ENCODE measurements at regions of chr20 and their contacts with region 1.

Region 1: DNA sequence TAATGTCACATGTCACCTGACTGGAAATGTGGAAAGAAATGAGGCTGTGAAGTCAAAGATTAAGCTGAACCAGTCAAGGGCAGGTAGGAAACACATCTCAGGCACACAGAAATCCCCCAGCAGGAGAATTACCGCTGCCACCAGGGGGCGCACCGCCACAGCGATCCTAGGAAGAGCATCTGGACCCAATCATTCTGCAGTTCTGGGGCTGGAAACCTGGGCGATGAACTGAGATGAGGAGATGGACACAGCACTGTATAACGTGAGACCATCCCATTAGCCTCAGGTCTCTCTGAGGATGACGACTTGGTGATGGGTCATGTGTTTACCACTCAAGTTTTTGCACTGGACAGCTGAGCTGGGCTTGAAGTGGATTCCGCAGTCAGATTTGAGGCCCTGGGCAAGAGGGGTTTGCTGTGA is 6.5 kb upstream of the SLC24A3 start:
- DNase-seq: peak; percentile 46 to 82 (median 64)
- ATAC-seq: peak in 3 of 4 donors; percentile 48 to 70 (median 61)
- H3K4me3 ChIP-seq: no peak overlapping the region
- H3K27ac ChIP-seq: no peak overlapping the region
- H3K4me1 ChIP-seq: peaks cover 0 to 4% (median 0%) of the 10 kb centered on the region in 12 donors
- H3K27me3 ChIP-seq: peaks cover 0 to 12% (median 0%) of the 10 kb centered on the region in 9 donors
- CTCF ChIP-seq: peak; percentile 77 to 92 (median 84)
- POLR2A ChIP-seq: no peak

Region 2: DNA sequence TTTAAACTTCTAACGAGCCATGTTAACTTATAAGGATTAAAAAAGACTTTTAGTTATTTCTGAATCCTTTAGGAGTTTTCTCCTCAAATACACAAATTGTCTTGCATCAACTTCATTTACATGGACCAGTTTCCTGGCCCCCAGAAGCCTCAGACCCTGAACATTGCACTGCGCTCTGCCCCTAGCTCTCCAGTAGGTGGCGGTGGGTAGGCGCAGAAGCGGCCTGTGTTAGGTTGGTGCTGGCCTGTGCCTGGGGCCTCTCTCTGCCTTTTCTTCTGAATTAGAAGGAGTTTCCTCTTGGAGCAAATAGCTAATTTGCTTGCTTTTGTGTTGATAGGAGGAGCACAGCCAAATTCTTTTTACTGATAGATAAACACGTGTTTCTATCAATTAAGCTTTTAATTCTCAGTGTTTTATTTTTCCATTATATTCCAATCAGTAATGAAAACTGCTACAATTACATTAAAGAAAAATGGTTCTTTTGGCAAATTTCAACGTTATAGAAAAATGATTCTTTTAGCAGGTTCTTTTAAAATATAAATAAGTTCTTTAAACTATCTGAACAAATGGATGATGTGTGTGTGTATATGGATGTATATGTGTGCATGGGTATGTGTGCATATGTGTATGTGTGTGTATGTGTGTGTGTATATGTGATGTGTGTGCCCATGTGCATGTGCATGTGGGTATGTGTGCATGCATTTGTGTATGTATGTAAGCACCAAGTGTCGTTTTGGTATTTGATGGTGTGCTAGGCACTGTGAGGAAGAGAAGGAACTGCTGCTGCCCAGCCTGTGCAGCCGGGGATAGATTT is 573.6 kb before region 1 on chr20:
- intact Hi-C with region 1: loop called in 1 of 10 experiments (anchors 10 kb)
- DNase-seq: peak; percentile 56 to 70 (median 61)
- ATAC-seq: peak; percentile 88 to 94 (median 89)
- H3K4me3 ChIP-seq: no peak overlapping the region
- H3K27ac ChIP-seq: no peak overlapping the region
- H3K4me1 ChIP-seq: peaks cover 0 to 5% (median 0%) of the 10 kb centered on the region in 12 donors
- H3K27me3 ChIP-seq: no peaks in the 10 kb centered on the region
- CTCF ChIP-seq: peak; percentile 77 to 96 (median 86)
- POLR2A ChIP-seq: no peak

Region 3: GRCh38 chr20:18904624-18905023 is 301.4 kb before region 1 on chr20:
- intact Hi-C with region 1: loop called in 3 of 10 experiments (anchors 10 kb)
- DNase-seq: peak in 1 of 5 donors; percentile 27
- ATAC-seq: peak in 2 of 4 donors; percentile 64 to 66
- H3K4me3 ChIP-seq: no peak overlapping the region
- H3K27ac ChIP-seq: no peak overlapping the region
- H3K4me1 ChIP-seq: no peaks in the 10 kb centered on the region
- H3K27me3 ChIP-seq: no peaks in the 10 kb centered on the region
- CTCF ChIP-seq: peak in 9 of 12 donors; percentile 6 to 60 (median 46)
- POLR2A ChIP-seq: no peak

Region 4: DNA sequence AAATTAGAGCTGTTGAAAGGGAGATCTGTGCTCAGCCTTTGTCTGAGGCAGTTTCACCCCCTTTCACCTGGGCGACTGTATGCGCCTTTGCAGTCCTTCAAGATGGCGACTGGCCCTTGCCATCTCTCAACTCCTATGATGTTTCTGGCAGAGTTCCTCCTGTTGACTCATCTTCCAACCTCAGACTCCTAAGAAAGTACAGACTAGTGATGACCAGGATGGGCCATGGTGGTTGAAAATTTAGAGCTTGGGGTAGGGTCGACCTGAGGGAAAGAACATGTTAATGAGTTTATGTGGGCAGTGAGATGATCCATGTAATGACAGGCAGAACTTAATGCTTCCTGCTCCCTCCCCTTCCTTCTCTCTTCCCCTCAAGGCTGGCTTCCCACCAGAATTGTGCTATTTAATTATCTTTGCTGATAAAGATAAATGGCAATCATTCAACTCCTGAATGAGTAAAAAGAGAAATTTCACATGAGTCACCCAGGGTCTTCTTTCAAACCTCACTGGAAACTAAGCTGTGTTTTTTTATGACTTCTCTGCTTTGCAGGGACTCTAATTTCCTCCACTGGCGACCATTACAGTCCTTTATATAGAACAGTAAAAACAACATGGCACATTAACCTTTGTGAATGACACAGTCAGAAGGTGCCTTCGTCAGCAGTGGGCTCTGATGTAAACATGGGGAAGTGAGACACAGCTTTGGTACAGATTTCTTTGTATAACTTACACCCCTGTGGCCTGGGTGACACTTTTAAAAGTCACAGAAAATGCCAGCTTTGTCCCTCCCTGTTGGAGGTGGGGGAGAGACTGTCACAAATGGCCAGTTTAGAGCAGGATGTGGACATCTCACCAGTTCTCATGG is 288.9 kb before region 1 on chr20:
- intact Hi-C with region 1: loop called in 1 of 10 experiments (anchors 10 kb)
- DNase-seq: no peak
- ATAC-seq: no peak
- H3K4me3 ChIP-seq: no peak overlapping the region
- H3K27ac ChIP-seq: no peak overlapping the region
- H3K4me1 ChIP-seq: no peaks in the 10 kb centered on the region
- H3K27me3 ChIP-seq: no peaks in the 10 kb centered on the region
- CTCF ChIP-seq: no peak
- POLR2A ChIP-seq: no peak

Region 5: DNA sequence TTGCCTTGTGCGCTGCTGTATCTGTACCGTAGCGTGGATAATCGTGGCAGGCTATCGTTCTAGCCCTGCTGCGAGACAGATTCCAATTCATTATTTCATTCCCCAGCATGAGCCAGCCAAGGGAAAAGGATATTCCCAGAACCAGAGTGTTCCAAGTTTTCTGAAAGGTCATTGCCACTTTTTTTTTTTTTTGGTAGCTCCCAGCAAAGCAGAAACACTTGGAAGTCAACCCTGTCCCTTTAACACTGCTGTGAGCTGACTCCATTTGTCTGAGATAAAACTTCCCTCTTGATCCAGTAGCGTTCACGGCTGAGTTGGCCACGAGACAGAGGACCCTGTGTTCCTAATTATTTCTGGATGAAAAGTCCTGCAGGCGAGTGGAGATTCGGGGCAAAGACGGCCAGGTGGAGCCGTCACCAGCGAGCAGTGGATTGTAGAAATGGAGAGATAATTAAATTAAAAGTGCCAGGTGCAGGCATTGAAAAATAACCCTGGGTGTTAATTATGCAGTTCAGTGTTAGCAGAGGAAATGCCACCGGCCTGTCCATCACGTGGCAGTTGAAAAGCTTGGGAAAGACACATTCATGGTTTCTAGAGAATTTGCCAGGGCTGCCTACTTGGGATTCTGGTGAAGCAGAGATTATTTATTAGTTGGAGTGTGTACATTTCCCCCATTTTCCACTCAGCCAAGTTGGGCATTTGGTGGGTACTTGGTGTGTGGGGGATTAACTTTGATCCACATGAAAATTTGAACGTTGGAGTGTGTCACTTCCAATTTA is 170.7 kb after region 1 on chr20:
- intact Hi-C with region 1: loop called in 1 of 10 experiments (anchors 10 kb)
- DNase-seq: peak in 1 of 5 donors; percentile 41
- ATAC-seq: peak; percentile 56 to 88 (median 86)
- H3K4me3 ChIP-seq: peak overlapping the region in 6 of 12 donors; percentile 7 to 45 (median 22)
- H3K27ac ChIP-seq: peak overlapping the region in 1 of 12 donors; percentile 15
- H3K4me1 ChIP-seq: peaks cover 0 to 9% (median 0%) of the 10 kb centered on the region in 12 donors
- H3K27me3 ChIP-seq: no peaks in the 10 kb centered on the region
- CTCF ChIP-seq: no peak
- POLR2A ChIP-seq: no peak

Region 6: GRCh38 chr20:19583532-19584175 is 377.7 kb after region 1 on chr20:
- intact Hi-C with region 1: loop called (anchors 1 to 5 kb)
- DNase-seq: peak; percentile 44 to 79 (median 65)
- ATAC-seq: peak in 3 of 4 donors; percentile 81 to 86 (median 85)
- H3K4me3 ChIP-seq: no peak overlapping the region
- H3K27ac ChIP-seq: no peak overlapping the region
- H3K4me1 ChIP-seq: no peaks in the 10 kb centered on the region
- H3K27me3 ChIP-seq: peaks cover 0 to 6% (median 0%) of the 10 kb centered on the region in 9 donors
- CTCF ChIP-seq: peak; percentile 70 to 85 (median 79)
- POLR2A ChIP-seq: no peak